ENCODE measurements at regions of chrX and their contacts with region 1.

Region 1: GRCh38 chrX:52995135-52996020 is 37.1 kb upstream of the FAM156A start:
- DNase-seq: peak; percentile 91
- H3K4me3 ChIP-seq: peak overlapping the region; percentile 60 to 66 (median 64)
- H3K27ac ChIP-seq: peak overlapping the region; percentile 87
- H3K4me1 ChIP-seq: peaks cover 3% of the 10 kb centered on the region
- H3K27me3 ChIP-seq: no peaks in the 10 kb centered on the region
- CTCF ChIP-seq: peak; percentile 54 to 73

Region 2: GRCh38 chrX:52346512-52347194 is 648.7 kb before region 1 on chrX:
- CTCF ChIA-PET with region 1: no interaction called
- dilution Hi-C with region 1: no loop called
- in situ Hi-C with region 1: no loop called
- intact Hi-C with region 1: loop called (anchors 5 kb)
- DNase-seq: peak; percentile 75
- H3K4me3 ChIP-seq: no peak overlapping the region
- H3K27ac ChIP-seq: no peak overlapping the region
- H3K4me1 ChIP-seq: peaks cover 4% of the 10 kb centered on the region
- H3K27me3 ChIP-seq: peaks cover 2% of the 10 kb centered on the region
- CTCF ChIP-seq: no peak

Region 3: DNA sequence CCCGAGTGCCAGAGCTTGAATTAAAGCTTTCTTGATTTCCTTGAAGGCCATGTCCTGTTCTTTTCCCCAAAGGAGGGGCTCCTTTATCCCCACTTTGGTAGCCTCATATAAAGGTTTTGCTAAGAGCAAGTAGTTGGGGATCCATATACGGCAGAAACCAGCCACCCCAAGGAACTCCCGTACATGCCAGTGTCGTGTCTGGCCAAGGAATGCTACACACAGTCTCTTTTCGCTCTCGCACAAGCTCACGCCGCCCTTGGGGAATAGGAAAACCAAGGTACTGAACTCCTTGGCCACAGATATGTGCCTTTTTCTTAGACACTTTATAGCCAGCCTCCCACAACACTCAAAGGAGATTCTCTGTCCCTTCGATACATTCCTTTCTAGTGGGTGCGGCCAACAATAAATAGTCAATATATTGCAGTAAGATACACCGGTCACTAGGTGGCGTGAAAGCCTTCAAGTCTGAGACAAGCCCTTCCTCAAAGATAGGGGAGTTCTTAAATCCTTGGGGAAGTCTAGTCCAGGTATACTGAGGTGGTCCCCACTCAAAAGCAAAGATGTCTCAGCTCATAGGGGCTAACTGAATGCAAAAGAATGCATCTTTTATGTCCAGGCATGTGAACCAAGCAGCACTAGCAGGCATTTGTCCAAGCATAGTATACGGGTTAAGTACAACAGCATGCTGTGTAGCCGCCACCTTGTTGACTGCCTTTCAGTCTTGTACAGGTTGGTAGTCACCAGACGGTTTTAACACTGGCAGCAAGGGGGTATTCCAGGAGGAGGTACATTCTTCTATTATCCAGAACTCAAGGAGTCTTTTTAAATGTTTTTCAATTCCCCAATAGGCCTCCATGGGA is 420.7 kb before region 1 on chrX:
- CTCF ChIA-PET with region 1: no interaction called
- dilution Hi-C with region 1: no loop called
- in situ Hi-C with region 1: loop called in 1 of 2 experiments (anchors 25 kb)
- intact Hi-C with region 1: loop called (anchors 1 kb)
- DNase-seq: peak; percentile 46
- H3K4me3 ChIP-seq: no peak overlapping the region
- H3K27ac ChIP-seq: no peak overlapping the region
- H3K4me1 ChIP-seq: peaks cover 2% of the 10 kb centered on the region
- H3K27me3 ChIP-seq: no peaks in the 10 kb centered on the region
- CTCF ChIP-seq: peak; percentile 61 to 68

Region 4: GRCh38 chrX:52979993-52980392 is 15.4 kb before region 1 on chrX:
- CTCF ChIA-PET with region 1: interaction called, 3 read pairs
- dilution Hi-C with region 1: no loop called
- in situ Hi-C with region 1: no loop called
- intact Hi-C with region 1: loop called (anchors 1 kb)
- DNase-seq: no peak
- H3K4me3 ChIP-seq: no peak overlapping the region
- H3K27ac ChIP-seq: no peak overlapping the region
- H3K4me1 ChIP-seq: peaks cover 9% of the 10 kb centered on the region
- H3K27me3 ChIP-seq: no peaks in the 10 kb centered on the region
- CTCF ChIP-seq: no peak

Region 5: DNA sequence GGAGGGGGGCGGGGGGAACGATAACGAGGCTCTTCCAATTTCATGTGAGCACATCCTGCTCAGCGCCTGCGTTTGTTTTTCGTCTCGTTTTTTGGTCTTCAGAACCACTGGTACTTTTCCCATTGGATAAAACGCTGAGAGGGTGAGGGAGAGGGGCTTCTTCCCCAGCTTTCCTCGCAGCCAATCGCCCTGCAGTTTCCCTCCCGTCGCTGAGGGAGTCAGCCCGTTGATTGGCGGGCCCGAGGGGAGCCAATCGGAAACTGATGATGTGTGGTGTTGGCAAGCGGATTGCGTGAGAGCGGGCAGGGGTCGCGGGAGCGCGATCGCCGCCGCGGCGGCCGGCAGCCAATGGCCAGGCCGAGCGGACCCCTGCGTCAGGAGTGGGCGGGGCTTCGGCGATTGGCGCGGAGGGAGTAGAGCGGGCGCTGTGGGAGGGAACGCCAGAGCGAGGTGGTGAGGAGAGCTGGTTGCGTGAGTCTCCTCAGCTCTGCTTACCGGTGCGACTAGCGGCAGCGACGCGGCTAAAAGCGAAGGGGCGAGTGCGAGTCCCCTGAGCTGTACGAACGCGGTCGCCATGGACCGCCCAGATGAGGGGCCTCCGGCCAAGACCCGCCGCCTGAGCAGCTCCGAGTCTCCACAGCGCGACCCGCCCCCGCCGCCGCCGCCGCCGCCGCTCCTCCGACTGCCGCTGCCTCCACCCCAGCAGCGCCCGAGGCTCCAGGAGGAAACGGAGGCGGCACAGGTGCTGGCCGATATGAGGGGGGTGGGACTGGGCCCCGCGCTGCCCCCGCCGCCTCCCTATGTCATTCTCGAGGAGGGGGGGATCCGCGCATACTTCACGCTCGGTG is 86.8 kb after region 1 on chrX and contains the start of gene TSPYL2:
- CTCF ChIA-PET with region 1: no interaction called
- dilution Hi-C with region 1: no loop called
- in situ Hi-C with region 1: no loop called
- intact Hi-C with region 1: no loop called
- DNase-seq: peak; percentile 89
- H3K4me3 ChIP-seq: peak within 1 kb of the TSS; percentile 55 to 66 (median 60)
- H3K27ac ChIP-seq: peak within 1 kb of the TSS; percentile 65
- H3K4me1 ChIP-seq: peaks cover 11% of the 10 kb centered on the region
- H3K27me3 ChIP-seq: no peaks in the 10 kb centered on the region
- CTCF ChIP-seq: no peak
- total RNA-seq, gene TSPYL2: 13.2 to 19.5 TPM